ENCODE measurements at regions of chr5 and their contacts with region 1.

Region 1: GRCh38 chr5:149828161-149828884 is 98.2 kb downstream of the PPARGC1B start:
- DNase-seq: peak; percentile 86
- H3K4me3 ChIP-seq: no peak overlapping the region
- H3K27ac ChIP-seq: peak overlapping the region in 1 of 2 donors; percentile 3
- H3K4me1 ChIP-seq: no peaks in the 10 kb centered on the region
- H3K27me3 ChIP-seq: no peaks in the 10 kb centered on the region
- CTCF ChIP-seq: peak; percentile 84 to 95 (median 92)
- POLR2A ChIP-seq: no peak

Region 2: DNA sequence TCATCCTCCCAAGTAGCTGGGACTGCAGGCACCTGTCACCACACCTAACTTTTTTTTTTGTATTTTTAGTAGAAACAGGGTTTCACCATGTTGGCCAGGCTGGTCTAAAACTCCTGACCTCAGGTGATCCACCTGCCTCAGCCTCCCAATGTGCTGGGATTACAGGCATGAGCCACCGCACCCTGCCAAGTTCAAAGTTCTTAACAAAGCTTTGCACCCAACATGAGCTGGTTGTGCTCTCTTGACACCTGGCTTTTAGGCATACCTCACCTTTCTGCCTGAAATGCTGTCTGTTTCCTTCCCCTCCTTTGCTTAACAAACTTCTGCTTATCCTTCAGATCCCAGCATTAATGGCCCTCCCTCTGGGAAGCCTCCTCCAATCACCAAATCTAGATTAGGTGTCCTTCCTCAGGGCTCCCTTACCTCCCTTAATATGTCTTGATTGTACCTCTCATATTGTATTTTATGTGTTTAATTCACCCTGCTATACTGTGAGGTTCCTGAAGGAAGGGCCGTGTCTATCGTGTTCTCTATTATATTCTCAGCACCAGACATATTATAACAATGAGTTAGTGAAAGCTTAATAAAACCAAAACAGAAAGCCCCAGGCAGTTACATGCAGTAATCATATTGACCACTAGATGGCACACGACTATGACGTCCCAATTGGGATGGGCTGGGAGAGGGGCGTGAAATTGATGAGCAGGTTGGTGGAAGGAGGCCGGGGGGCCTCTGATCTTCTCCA is 161.1 kb before region 1 on chr5:
- intact Hi-C with region 1: loop called (anchors 2 kb)
- DNase-seq: no peak
- H3K4me3 ChIP-seq: no peak overlapping the region
- H3K27ac ChIP-seq: no peak overlapping the region
- H3K4me1 ChIP-seq: no peaks in the 10 kb centered on the region
- H3K27me3 ChIP-seq: no peaks in the 10 kb centered on the region
- CTCF ChIP-seq: peak; percentile 70 to 91 (median 75)
- POLR2A ChIP-seq: no peak

Region 3: DNA sequence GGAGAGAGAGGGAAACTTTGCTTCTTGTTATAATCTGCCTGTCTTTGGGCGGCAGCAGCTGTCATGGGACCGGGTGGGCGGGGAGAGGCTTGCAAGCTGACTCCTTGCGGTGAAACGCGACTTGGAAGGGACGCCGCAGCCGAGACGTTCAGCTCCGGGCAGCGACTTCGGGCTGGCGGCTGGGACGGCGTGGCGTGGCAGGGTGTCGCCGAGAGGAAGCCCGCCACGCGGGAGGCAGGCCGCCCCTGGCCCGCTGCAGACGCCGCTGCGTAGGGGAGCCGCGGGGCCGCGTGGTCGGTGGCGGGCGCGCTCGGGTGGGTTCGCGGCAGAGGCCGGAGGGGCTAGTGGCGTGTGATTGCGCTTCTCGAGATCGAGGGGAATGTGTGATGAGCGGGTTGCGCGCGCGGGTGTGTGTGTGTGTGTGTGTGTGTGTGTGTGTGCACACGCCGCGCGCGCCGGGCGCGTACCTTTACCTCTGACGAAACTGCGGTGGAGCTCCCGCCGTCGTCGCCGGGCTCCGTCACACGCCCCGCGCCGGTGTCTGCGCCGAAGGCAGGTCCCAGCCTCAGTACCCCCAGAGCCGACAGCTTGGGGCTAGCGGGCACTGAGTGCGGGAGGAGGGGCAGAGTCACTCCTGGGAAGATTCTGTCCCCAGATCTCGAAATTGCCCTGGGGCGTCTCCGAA is 96.5 kb before region 1 on chr5:
- intact Hi-C with region 1: loop called (anchors 2 kb)
- DNase-seq: peak; percentile 89
- H3K4me3 ChIP-seq: peak overlapping the region; percentile 60 to 71
- H3K27ac ChIP-seq: peak overlapping the region; percentile 72 to 77
- H3K4me1 ChIP-seq: no peaks in the 10 kb centered on the region
- H3K27me3 ChIP-seq: no peaks in the 10 kb centered on the region
- CTCF ChIP-seq: peak in 1 of 4 experiments; percentile 26
- POLR2A ChIP-seq: peak; percentile 80

Region 4: DNA sequence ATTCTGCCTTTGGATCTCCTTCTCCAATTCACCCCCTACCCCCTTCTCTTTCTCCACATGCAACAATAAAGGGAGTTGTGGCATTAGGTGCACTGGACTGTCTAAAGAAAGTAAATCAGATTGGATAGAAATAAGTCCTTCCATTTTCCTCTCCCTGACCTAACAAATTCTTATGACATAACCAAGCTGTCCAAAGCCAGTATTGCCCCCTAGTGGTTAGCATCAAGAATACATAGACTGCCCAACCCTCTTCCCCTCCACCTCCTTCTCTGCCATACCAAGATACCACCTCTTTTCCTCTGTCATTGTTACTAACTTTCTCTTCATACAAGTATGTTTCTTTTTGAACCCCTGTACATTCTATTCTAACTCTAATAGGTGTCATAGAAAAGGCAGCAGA is 52.5 kb before region 1 on chr5:
- intact Hi-C with region 1: loop called (anchors 5 kb)
- DNase-seq: no peak
- H3K4me3 ChIP-seq: no peak overlapping the region
- H3K27ac ChIP-seq: no peak overlapping the region
- H3K4me1 ChIP-seq: peaks cover 5% of the 10 kb centered on the region
- H3K27me3 ChIP-seq: no peaks in the 10 kb centered on the region
- CTCF ChIP-seq: peak in 2 of 4 experiments; percentile 16 to 29
- POLR2A ChIP-seq: no peak

Region 5: GRCh38 chr5:149801307-149801990 is 26.9 kb before region 1 on chr5:
- intact Hi-C with region 1: loop called (anchors 1 kb)
- DNase-seq: no peak
- H3K4me3 ChIP-seq: no peak overlapping the region
- H3K27ac ChIP-seq: peak overlapping the region in 1 of 2 donors; percentile 49
- H3K4me1 ChIP-seq: no peaks in the 10 kb centered on the region
- H3K27me3 ChIP-seq: no peaks in the 10 kb centered on the region
- CTCF ChIP-seq: no peak
- POLR2A ChIP-seq: no peak

Region 6: GRCh38 chr5:150000256-150000989 is 172.1 kb after region 1 on chr5 and contains the starts of genes HMGXB3 and TIGD6:
- intact Hi-C with region 1: no loop called
- DNase-seq: peak; percentile 84
- H3K4me3 ChIP-seq: peak within 1 kb of the TSS; percentile 91 to 98
- H3K27ac ChIP-seq: peak within 1 kb of the TSS; percentile 93 to 95
- H3K4me1 ChIP-seq: peaks cover 23% of the 10 kb centered on the region
- H3K27me3 ChIP-seq: no peaks in the 10 kb centered on the region
- CTCF ChIP-seq: peak in 3 of 4 experiments; percentile 12 to 37 (median 15)
- POLR2A ChIP-seq: peak; percentile 69
- total RNA-seq, gene HMGXB3: 49.6 to 64.2 TPM
- total RNA-seq, gene TIGD6: 4.7 to 11.7 TPM